A549 (cell line): ENCODE measurements at regions of chr12 and their contacts with region 1.

Region 1: GRCh38 chr12:52082988-52083637 is 3.6 kb downstream of the SMIM41 start:
- DNase-seq: peak; percentile 57 to 85
- ATAC-seq: peak; percentile 54 to 76
- H3K4me3 ChIP-seq: no peak overlapping the region
- H3K27ac ChIP-seq: 0 out of 6 replicates have a peak overlapping the region, but pooled peaks of 1 of the 2 experiments have one; percentile 1
- H3K4me1 ChIP-seq: peaks cover 2% of the 10 kb centered on the region; the same call in 1 of the 3 replicates
- CTCF ChIP-seq: peak; percentile 95
- EP300 ChIP-seq: no peak
- POLR2A ChIP-seq: no peak
- RAD21 ChIP-seq: peak; percentile 86 to 91

Region 2: GRCh38 chr12:51994959-51995358 is 88.2 kb before region 1 on chr12:
- CTCF ChIA-PET with region 1: interaction called, 29 read pairs
- POLR2A ChIA-PET with region 1: no interaction called
- DNase-seq: no peak
- ATAC-seq: no peak
- H3K4me3 ChIP-seq: no peak overlapping the region
- H3K27ac ChIP-seq: no peak overlapping the region
- H3K4me1 ChIP-seq: peaks cover 4% of the 10 kb centered on the region; the same call in 2 of the 3 replicates
- CTCF ChIP-seq: no peak
- EP300 ChIP-seq: no peak
- POLR2A ChIP-seq: no peak
- RAD21 ChIP-seq: no peak

Region 3: GRCh38 chr12:52004042-52004648 is 79.0 kb before region 1 on chr12:
- CTCF ChIA-PET with region 1: interaction called, 1,730 read pairs
- POLR2A ChIA-PET with region 1: no interaction called
- DNase-seq: peak; percentile 69 to 78
- ATAC-seq: peak; percentile 73 to 83
- H3K4me3 ChIP-seq: no peak overlapping the region
- H3K27ac ChIP-seq: no peak overlapping the region
- H3K4me1 ChIP-seq: 0 out of 3 replicates have a peak, but pooled peaks cover 3% of the 10 kb centered on the region
- CTCF ChIP-seq: peak; percentile 88
- EP300 ChIP-seq: no peak
- POLR2A ChIP-seq: no peak
- RAD21 ChIP-seq: peak; percentile 90 to 95

Region 4: DNA sequence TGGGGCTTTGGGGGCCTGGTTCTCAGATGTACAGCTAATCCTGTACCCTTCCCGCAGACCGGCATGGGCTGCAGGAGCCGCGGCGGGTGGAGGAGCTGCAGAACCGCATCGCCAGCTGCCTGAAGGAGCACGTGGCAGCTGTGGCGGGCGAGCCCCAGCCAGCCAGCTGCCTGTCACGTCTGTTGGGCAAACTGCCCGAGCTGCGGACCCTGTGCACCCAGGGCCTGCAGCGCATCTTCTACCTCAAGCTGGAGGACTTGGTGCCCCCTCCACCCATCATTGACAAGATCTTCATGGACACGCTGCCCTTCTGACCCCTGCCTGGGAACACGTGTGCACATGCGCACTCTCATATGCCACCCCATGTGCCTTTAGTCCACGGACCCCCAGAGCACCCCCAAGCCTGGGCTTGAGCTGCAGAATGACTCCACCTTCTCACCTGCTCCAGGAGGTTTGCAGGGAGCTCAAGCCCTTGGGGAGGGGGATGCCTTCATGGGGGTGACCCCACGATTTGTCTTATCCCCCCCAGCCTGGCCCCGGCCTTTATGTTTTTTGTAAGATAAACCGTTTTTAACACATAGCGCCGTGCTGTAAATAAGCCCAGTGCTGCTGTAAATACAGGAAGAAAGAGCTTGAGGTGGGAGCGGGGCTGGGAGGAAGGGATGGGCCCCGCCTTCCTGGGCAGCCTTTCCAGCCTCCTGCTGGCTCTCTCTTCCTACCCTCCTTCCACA is 24.3 kb before region 1 on chr12:
- CTCF ChIA-PET with region 1: interaction called, 256 read pairs
- POLR2A ChIA-PET with region 1: no interaction called
- DNase-seq: peak in 1 of 2 experiments; percentile 74
- ATAC-seq: no peak
- H3K4me3 ChIP-seq: no peak overlapping the region
- H3K27ac ChIP-seq: no peak overlapping the region
- H3K4me1 ChIP-seq: peaks cover 13% of the 10 kb centered on the region
- CTCF ChIP-seq: no peak
- EP300 ChIP-seq: no peak
- POLR2A ChIP-seq: no peak
- RAD21 ChIP-seq: no peak